CD8-positive, alpha-beta memory T cell (primary cell): ENCODE measurements at regions of chr2 and their contacts with region 1.

Region 1: GRCh38 chr2:102442967-102443828 is 20.2 kb downstream of the IL18RAP start:
- DNase-seq: peak in 4 of 5 donors; percentile 17 to 51 (median 40)
- H3K4me3 ChIP-seq: no peak overlapping the region
- H3K4me3 Mint-ChIP-seq: peak overlapping the region in 5 of 7 donors; percentile 23 to 62 (median 45)
- H3K27ac ChIP-seq: no peak overlapping the region
- H3K27ac Mint-ChIP-seq: peak overlapping the region; percentile 0 to 83 (median 42)
- H3K4me1 ChIP-seq: peaks cover 6% of the 10 kb centered on the region
- H3K4me1 Mint-ChIP-seq: peaks cover 6 to 18% (median 8%) of the 10 kb centered on the region in 3 donors
- H3K27me3 ChIP-seq: no peaks in the 10 kb centered on the region
- H3K27me3 Mint-ChIP-seq: no peaks in the 10 kb centered on the region

Region 2: GRCh38 chr2:102020596-102021181 is 422.5 kb before region 1 on chr2:
- CTCF ChIA-PET with region 1: interaction called, 15 read pairs
- POLR2A ChIA-PET with region 1: no interaction called
- DNase-seq: peak; percentile 65 to 85 (median 70)
- H3K4me3 ChIP-seq: no peak overlapping the region
- H3K4me3 Mint-ChIP-seq: no peak overlapping the region
- H3K27ac ChIP-seq: no peak overlapping the region
- H3K27ac Mint-ChIP-seq: no peak overlapping the region
- H3K4me1 ChIP-seq: no peaks in the 10 kb centered on the region
- H3K4me1 Mint-ChIP-seq: peaks cover 0 to 3% (median 0%) of the 10 kb centered on the region in 3 donors
- H3K27me3 ChIP-seq: no peaks in the 10 kb centered on the region
- H3K27me3 Mint-ChIP-seq: peaks cover 4 to 6% of the 10 kb centered on the region in 2 donors

Region 3: DNA sequence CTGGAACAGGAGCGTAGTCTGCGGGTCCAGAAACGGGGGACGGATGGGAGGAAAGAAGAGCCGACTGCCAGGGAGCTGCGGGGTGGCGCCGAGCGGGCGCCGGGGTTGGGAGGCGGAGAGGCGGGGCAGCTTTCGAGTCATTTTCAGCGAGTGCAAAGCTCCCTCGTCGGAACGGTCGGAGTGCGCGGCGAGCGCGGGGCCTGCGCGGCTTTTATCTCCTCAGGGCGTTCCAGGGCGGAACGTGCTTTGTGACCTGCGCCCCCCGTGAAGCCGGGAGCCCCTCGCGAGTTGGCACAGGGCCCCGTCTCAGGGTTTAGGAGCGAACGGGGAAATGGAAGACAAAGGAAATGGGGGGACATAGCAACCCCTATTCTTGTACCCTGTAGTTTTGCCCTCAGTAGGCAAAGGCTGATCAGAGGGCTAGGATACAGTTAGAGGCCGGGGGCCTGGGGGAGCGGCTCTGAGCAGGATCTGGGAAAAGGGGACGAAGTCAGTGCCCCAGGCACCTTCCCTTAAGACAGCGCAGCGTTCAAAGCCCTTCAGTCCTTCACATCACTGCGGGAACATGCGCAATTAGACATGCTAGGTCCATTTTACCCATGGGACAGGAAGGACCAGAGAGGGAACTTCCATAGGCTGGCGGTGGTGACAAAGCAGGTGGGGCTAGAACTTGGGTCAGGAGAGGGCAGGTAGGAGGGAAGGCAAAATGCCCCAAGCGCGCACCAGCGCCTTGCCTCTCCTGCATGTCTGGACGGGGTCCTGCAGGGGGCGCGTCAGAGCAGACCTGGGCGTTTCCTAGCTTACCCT is 192.0 kb before region 1 on chr2:
- CTCF ChIA-PET with region 1: interaction called, 25 read pairs
- POLR2A ChIA-PET with region 1: no interaction called
- DNase-seq: peak; percentile 35 to 68 (median 46)
- H3K4me3 ChIP-seq: peak overlapping the region; percentile 72
- H3K4me3 Mint-ChIP-seq: peak overlapping the region; percentile 86 to 95 (median 93)
- H3K27ac ChIP-seq: no peak overlapping the region
- H3K27ac Mint-ChIP-seq: peak overlapping the region in 7 of 8 donors; percentile 12 to 91 (median 87)
- H3K4me1 ChIP-seq: peaks cover 9% of the 10 kb centered on the region
- H3K4me1 Mint-ChIP-seq: peaks cover 34 to 45% (median 40%) of the 10 kb centered on the region in 3 donors
- H3K27me3 ChIP-seq: no peaks in the 10 kb centered on the region
- H3K27me3 Mint-ChIP-seq: peaks cover 3 to 4% of the 10 kb centered on the region in 2 donors

Region 4: DNA sequence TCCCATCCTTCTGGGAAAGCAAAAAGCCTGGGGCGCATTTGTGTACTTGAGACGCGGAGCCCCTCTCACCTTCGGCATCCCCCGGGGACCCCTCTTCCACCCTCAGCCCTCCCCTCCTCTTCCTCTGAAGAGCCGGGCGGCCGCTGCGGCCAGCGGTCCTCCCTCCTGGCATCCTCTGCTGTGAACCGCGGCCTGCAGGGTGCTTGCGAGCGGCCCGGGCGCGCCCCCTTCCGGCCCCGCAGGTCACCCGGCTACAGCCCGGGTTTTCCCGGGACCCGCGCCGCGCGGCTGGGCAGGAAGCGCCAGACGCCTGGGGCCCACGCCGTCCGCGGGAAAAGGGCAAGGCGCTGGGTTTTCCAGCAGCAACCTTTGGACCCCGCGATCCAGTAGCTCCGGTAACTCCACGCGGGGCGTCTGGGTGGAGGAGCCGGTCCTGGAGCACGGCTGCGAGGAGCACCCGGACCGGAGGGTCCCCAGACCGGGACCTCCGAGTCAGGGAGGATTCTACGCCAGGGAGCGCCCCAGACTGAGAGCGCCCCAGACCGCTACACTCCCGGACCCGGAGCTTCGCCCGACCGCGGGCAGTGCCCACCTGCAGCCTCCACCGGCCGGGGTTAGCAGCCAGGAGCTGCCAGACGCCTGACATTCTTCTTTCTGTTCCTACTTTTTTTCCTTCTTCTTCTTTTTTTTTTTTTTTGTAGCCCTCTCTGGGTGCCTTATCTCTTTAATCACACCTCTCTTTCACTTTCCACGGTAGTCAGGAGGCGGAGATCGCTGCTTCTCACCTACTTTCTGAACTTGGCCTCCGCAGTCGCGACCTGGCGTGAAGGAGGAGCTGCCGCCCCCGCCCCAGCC is 87.4 kb before region 1 on chr2 and contains the start of gene IL18R1:
- CTCF ChIA-PET with region 1: interaction called, 15 read pairs
- POLR2A ChIA-PET with region 1: no interaction called
- DNase-seq: peak; percentile 60 to 74 (median 68)
- H3K4me3 ChIP-seq: peak within 1 kb of the TSS; percentile 68
- H3K4me3 Mint-ChIP-seq: peak within 1 kb of the TSS; percentile 92 to 100 (median 98)
- H3K27ac ChIP-seq: peak within 1 kb of the TSS; percentile 58
- H3K27ac Mint-ChIP-seq: peak within 1 kb of the TSS; percentile 89 to 99 (median 97)
- H3K4me1 ChIP-seq: peaks cover 10% of the 10 kb centered on the region
- H3K4me1 Mint-ChIP-seq: peaks cover 36 to 52% (median 47%) of the 10 kb centered on the region in 3 donors
- H3K27me3 ChIP-seq: no peaks in the 10 kb centered on the region
- H3K27me3 Mint-ChIP-seq: peaks cover 0 to 2% of the 10 kb centered on the region in 2 donors
- total RNA-seq, gene IL18R1: 17.6 to 17.9 TPM

Region 5: GRCh38 chr2:102422910-102423309 is 20.3 kb before region 1 on chr2 and contains the start of gene IL18RAP:
- CTCF ChIA-PET with region 1: no interaction called
- POLR2A ChIA-PET with region 1: no interaction called
- DNase-seq: no peak
- H3K4me3 ChIP-seq: no peak within 1 kb of the TSS
- H3K4me3 Mint-ChIP-seq: peak within 1 kb of the TSS; percentile 55 to 98 (median 94)
- H3K27ac ChIP-seq: no peak within 1 kb of the TSS
- H3K27ac Mint-ChIP-seq: peak within 1 kb of the TSS; percentile 43 to 100 (median 89)
- H3K4me1 ChIP-seq: peaks cover 29% of the 10 kb centered on the region
- H3K4me1 Mint-ChIP-seq: peaks cover 54 to 91% (median 89%) of the 10 kb centered on the region in 3 donors
- H3K27me3 ChIP-seq: no peaks in the 10 kb centered on the region
- H3K27me3 Mint-ChIP-seq: peaks cover 0 to 1% of the 10 kb centered on the region in 2 donors
- total RNA-seq, gene IL18RAP: 4.1 to 4.9 TPM